GM23248 (cell line): ENCODE measurements at regions of chr17 and their contacts with region 1.

Region 1: GRCh38 chr17:9959377-9959981 is 54.4 kb upstream of the RCVRN start:
- DNase-seq: peak; percentile 46
- H3K4me3 ChIP-seq: no peak overlapping the region
- H3K27ac ChIP-seq: no peak overlapping the region
- H3K4me1 ChIP-seq: no peaks in the 10 kb centered on the region
- H3K27me3 ChIP-seq: no peaks in the 10 kb centered on the region

Region 2: GRCh38 chr17:10618202-10618635 is 658.7 kb after region 1 on chr17:
- in situ Hi-C with region 1: loop called (anchors 10 kb)
- DNase-seq: peak; percentile 84
- H3K4me3 ChIP-seq: no peak overlapping the region
- H3K27ac ChIP-seq: no peak overlapping the region
- H3K4me1 ChIP-seq: peaks cover 13% of the 10 kb centered on the region
- H3K27me3 ChIP-seq: no peaks in the 10 kb centered on the region